ENCODE measurements at regions of chr17 and their contacts with region 1.

Region 1: GRCh38 chr17:35514564-35514963 is 22.9 kb downstream of the SLFN12L start:
- DNase-seq: no peak
- ATAC-seq: no peak
- H3K4me3 ChIP-seq: no peak overlapping the region
- H3K4me3 Mint-ChIP-seq: no peak overlapping the region
- H3K27ac ChIP-seq: no peak overlapping the region
- H3K27ac Mint-ChIP-seq: peak overlapping the region; percentile 23 to 65
- H3K4me1 ChIP-seq: peaks cover 2 to 36% of the 10 kb centered on the region in 2 experiments
- H3K4me1 Mint-ChIP-seq: peaks cover 78 to 87% (median 85%) of the 10 kb centered on the region in 3 donors
- H3K27me3 ChIP-seq: no peaks in the 10 kb centered on the region
- H3K27me3 Mint-ChIP-seq: no peaks in the 10 kb centered on the region

Region 2: DNA sequence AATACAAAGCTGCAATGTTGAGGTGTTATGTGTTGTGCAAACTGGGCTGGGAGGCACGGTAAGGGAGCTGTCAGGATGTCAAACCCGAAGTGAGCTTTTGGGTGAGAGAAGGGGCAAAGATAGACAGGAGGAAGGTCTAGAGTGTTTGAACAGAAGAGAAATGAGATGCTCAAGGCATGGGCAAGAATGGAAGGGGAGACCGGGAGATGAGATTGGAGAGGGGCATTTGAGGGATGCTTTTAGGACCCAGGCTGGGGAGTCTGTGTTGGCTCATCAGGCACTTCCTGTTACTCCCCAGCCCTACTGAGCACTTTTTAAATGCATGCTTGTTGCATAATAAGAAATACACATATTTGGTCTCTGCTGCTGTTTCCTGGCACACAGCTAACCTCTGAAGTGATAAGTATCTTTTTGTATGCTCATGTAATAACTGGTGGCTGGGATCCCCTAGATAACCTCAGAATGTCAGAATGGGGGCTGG is 353.2 kb before region 1 on chr17:
- CTCF ChIA-PET with region 1: no interaction called
- POLR2A ChIA-PET with region 1: interaction called in 1 of 2 experiments, 13 read pairs
- DNase-seq: peak in 31 of 35 experiments; percentile 8 to 69 (median 28)
- ATAC-seq: peak; percentile 67 to 83 (median 80)
- H3K4me3 ChIP-seq: peak overlapping the region in 1 of 2 donors; percentile 27
- H3K4me3 Mint-ChIP-seq: peak overlapping the region; percentile 66 to 79 (median 71)
- H3K27ac ChIP-seq: peak overlapping the region; percentile 71
- H3K27ac Mint-ChIP-seq: peak overlapping the region; percentile 92 to 98
- H3K4me1 ChIP-seq: peaks cover 28 to 66% of the 10 kb centered on the region in 2 experiments
- H3K4me1 Mint-ChIP-seq: peaks cover 58 to 63% (median 61%) of the 10 kb centered on the region in 3 donors
- H3K27me3 ChIP-seq: no peaks in the 10 kb centered on the region
- H3K27me3 Mint-ChIP-seq: no peaks in the 10 kb centered on the region

Region 3: DNA sequence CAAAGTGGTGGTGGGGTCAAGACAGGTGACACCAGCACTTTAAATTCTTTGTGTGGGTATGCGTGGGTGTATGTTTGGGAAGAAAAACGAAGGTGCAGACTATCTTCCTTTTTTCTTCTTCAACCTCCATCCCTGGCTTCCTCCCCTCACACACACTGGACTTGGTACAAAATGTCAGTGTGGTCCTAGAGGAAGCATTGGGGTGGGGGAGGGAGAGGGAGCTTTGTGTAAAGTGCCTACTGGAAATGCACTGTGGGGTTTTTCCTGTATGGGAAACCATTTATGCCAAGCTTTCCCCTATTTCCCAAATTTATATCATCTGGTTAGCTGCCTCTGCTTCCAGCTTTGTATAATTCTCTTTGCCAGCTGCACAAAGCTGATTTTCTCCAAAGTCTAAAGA is 21.5 kb before region 1 on chr17:
- CTCF ChIA-PET with region 1: no interaction called
- POLR2A ChIA-PET with region 1: no interaction called
- DNase-seq: no peak
- ATAC-seq: no peak
- H3K4me3 ChIP-seq: no peak overlapping the region
- H3K4me3 Mint-ChIP-seq: no peak overlapping the region
- H3K27ac ChIP-seq: no peak overlapping the region
- H3K27ac Mint-ChIP-seq: peak overlapping the region; percentile 44 to 78
- H3K4me1 ChIP-seq: peaks cover 19 to 38% of the 10 kb centered on the region in 2 experiments
- H3K4me1 Mint-ChIP-seq: peaks cover 57 to 86% (median 82%) of the 10 kb centered on the region in 3 donors
- H3K27me3 ChIP-seq: peaks cover 0 to 8% of the 10 kb centered on the region in 2 experiments
- H3K27me3 Mint-ChIP-seq: no peaks in the 10 kb centered on the region

Measured in T-cell (primary cell).